HepG2 (cell line): ENCODE measurements at regions of chr3 and their contacts with region 1.

Region 1: GRCh38 chr3:51799879-51800749 is 21.1 kb upstream of the IQCF6 start:
- DNase-seq: peak; percentile 49
- ATAC-seq: 0 out of 3 replicates have a peak, but pooled peaks have one; percentile 33
- H3K4me3 ChIP-seq: no peak overlapping the region
- H3K27ac ChIP-seq: no peak overlapping the region
- H3K4me1 ChIP-seq: no peaks in the 10 kb centered on the region
- H3K27me3 ChIP-seq: peaks cover 2 to 21% of the 10 kb centered on the region in 2 experiments; a peak in 3 of 5 replicates
- CTCF ChIP-seq: peak; percentile 68
- EP300 ChIP-seq: no peak
- POLR2A ChIP-seq: no peak
- RAD21 ChIP-seq: peak; percentile 33; the same call in 1 of the 2 replicates

Region 2: DNA sequence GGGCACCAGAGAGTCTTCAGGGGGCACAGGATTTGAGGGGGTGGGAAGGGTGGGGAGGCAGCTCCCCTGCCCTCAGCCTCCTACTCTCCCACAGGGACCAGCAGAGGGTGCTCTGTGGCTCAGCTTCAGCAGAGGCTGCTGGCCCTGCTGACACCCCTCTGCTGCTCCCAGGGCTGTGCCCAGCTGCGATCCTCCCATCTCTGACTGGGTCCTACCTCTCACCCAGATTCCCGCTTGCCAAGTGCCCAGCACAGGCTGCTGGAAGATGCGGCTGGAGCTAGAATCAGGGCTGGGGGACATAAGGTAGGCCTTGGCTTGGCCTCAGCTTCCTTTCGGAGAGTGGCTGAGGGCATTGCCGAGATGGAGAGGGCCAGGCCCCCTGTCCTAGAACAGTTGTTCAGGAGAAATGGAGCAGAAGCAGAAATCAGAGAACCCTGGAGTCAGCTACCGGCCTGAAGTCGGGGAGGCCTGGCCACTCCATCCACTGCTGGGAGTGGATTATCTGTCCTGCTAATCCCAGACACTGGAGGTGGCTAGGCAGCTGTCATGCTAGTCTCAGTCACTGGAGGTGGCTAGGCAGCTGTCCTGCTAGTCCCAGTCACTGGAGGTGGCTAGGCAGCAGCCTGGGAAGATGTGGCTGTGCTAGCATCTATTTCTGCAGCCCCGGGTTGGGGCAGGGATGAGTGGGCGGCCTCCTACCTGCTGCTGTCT is 89.3 kb before region 1 on chr3:
- CTCF ChIA-PET with region 1: interaction called, 4 read pairs
- POLR2A ChIA-PET with region 1: no interaction called
- in situ Hi-C with region 1: loop called (anchors 5 kb)
- intact Hi-C with region 1: no loop called
- DNase-seq: no peak
- ATAC-seq: peak; percentile 62
- H3K4me3 ChIP-seq: no peak overlapping the region
- H3K27ac ChIP-seq: no peak overlapping the region
- H3K4me1 ChIP-seq: peaks cover 28% of the 10 kb centered on the region
- H3K27me3 ChIP-seq: peaks cover 2 to 13% of the 10 kb centered on the region in 2 experiments; a peak in 4 of 5 replicates
- CTCF ChIP-seq: peak; percentile 67
- EP300 ChIP-seq: no peak
- POLR2A ChIP-seq: no peak
- RAD21 ChIP-seq: no peak

Region 3: GRCh38 chr3:51718547-51719409 is 81.3 kb before region 1 on chr3:
- CTCF ChIA-PET with region 1: interaction called, 5 read pairs
- POLR2A ChIA-PET with region 1: no interaction called
- in situ Hi-C with region 1: loop called (anchors 5 kb)
- intact Hi-C with region 1: loop called (anchors 1 kb)
- DNase-seq: peak; percentile 64
- ATAC-seq: peak; percentile 94
- H3K4me3 ChIP-seq: no peak overlapping the region
- H3K27ac ChIP-seq: no peak overlapping the region
- H3K4me1 ChIP-seq: peaks cover 12% of the 10 kb centered on the region
- H3K27me3 ChIP-seq: 0 out of 5 replicates have a peak, but pooled peaks cover 0 to 2% of the 10 kb centered on the region in 2 experiments
- CTCF ChIP-seq: peak; percentile 90
- EP300 ChIP-seq: no peak
- POLR2A ChIP-seq: no peak
- RAD21 ChIP-seq: peak; percentile 80

Region 4: DNA sequence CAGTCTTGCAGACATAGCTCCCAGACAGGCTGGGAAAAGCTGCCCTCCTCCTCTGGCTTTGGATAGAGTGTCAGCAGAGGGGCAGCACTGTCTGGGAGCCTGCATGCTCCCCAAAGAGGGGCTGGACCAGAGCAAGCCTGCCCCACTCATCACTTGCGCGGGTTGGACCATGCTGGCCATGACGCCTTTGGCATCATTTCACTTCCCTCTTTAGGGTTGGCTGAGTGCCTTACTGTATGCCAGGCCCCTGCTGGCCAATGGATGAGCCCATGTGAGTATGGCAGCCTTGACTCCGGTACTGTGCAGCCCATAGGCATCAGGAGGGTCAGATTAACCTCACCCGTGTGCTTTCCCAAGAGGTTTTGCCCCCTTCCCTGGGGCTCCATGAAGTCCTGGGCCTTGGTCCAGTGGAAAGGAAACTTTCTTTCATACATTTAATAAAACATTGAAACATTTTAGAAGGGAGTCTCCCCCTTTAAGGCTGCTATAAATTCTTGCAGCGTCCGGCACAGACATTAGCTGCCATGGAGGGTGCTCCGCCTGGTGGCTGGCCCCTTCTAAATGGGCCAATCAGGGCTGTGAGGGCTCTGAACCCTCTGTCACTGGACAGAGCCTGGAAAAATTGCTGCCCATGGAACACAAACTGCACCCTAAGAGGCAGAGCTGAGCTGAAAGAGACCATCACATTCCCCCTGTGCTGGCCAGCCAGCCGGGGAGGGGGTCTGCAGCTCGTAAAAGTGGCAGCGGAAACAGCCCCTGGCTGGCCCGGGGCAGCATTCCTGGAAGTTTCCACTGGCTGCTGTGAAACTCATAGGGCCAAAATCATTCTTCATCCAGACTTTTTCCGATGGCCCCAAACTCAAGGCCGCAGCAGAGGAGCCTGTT is 277.0 kb after region 1 on chr3:
- CTCF ChIA-PET with region 1: no interaction called
- POLR2A ChIA-PET with region 1: no interaction called
- in situ Hi-C with region 1: no loop called
- intact Hi-C with region 1: no loop called
- DNase-seq: no peak
- ATAC-seq: no peak
- H3K4me3 ChIP-seq: no peak overlapping the region
- H3K27ac ChIP-seq: no peak overlapping the region
- H3K4me1 ChIP-seq: peaks cover 29% of the 10 kb centered on the region
- H3K27me3 ChIP-seq: no peaks in the 10 kb centered on the region
- CTCF ChIP-seq: no peak
- EP300 ChIP-seq: no peak
- POLR2A ChIP-seq: no peak
- RAD21 ChIP-seq: no peak

Region 5: DNA sequence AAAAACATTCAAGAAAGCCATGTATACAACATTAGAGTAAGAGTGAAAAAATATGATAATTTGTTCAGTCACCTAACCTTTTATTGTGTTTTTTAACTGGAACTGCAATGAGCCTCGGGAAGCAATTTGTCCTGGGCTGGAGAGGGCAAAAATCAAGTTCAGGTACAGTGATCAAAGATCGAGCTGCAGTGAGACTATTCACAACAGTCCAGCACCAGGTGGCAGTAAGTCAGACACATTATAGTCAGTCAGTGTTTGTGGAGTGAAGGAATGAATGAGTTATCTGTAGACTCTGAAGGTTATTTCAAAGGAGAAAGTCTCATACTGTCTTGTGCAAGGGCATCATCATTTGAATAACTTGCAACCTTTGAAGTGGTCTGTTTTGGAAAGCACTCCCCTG is 1929.5 kb after region 1 on chr3:
- CTCF ChIA-PET with region 1: no interaction called
- POLR2A ChIA-PET with region 1: no interaction called
- in situ Hi-C with region 1: no loop called
- intact Hi-C with region 1: no loop called
- DNase-seq: peak; percentile 56
- ATAC-seq: peak; percentile 98
- H3K4me3 ChIP-seq: no peak overlapping the region
- H3K27ac ChIP-seq: no peak overlapping the region
- H3K4me1 ChIP-seq: peaks cover 17% of the 10 kb centered on the region
- H3K27me3 ChIP-seq: no peaks in the 10 kb centered on the region
- CTCF ChIP-seq: peak; percentile 74
- EP300 ChIP-seq: no peak
- POLR2A ChIP-seq: no peak
- RAD21 ChIP-seq: no peak